Mammary epithelial cell (primary cell): ENCODE measurements at regions of chr19 and their contacts with region 1.

Region 1: GRCh38 chr19:36665832-36666231 is 805 bp downstream of the ZNF461 start:
- DNase-seq: no peak
- H3K4me3 ChIP-seq: peak overlapping the region; percentile 79 to 94 (median 92)
- H3K27ac ChIP-seq: peak overlapping the region; percentile 38
- H3K4me1 ChIP-seq: peaks cover 3% of the 10 kb centered on the region
- H3K27me3 ChIP-seq: no peaks in the 10 kb centered on the region
- CTCF ChIP-seq: no peak

Region 2: DNA sequence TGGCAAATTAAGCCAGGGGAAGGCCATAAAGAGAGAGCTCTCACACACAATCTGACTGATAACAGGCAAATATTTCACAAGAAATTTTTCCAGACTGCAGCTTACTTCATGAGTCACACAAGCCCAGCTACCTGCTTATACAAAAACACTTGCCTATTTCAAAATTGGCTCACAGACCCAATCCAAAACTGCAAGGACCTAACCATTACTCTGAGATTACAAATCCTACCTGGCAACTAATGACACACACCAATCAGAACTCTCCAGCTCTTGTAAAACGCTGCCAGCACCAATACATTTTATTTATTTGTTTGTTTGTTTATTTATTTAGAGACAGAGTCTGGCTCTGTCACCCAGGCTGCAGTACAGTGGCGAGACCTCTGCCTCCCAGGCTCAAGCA is 229.3 kb before region 1 on chr19:
- CTCF ChIA-PET with region 1: no interaction called
- dilution Hi-C with region 1: no loop called
- in situ Hi-C with region 1: no loop called
- intact Hi-C with region 1: no loop called
- DNase-seq: peak; percentile 34
- H3K4me3 ChIP-seq: no peak overlapping the region
- H3K27ac ChIP-seq: no peak overlapping the region
- H3K4me1 ChIP-seq: no peaks in the 10 kb centered on the region
- H3K27me3 ChIP-seq: no peaks in the 10 kb centered on the region
- CTCF ChIP-seq: no peak

Region 3: DNA sequence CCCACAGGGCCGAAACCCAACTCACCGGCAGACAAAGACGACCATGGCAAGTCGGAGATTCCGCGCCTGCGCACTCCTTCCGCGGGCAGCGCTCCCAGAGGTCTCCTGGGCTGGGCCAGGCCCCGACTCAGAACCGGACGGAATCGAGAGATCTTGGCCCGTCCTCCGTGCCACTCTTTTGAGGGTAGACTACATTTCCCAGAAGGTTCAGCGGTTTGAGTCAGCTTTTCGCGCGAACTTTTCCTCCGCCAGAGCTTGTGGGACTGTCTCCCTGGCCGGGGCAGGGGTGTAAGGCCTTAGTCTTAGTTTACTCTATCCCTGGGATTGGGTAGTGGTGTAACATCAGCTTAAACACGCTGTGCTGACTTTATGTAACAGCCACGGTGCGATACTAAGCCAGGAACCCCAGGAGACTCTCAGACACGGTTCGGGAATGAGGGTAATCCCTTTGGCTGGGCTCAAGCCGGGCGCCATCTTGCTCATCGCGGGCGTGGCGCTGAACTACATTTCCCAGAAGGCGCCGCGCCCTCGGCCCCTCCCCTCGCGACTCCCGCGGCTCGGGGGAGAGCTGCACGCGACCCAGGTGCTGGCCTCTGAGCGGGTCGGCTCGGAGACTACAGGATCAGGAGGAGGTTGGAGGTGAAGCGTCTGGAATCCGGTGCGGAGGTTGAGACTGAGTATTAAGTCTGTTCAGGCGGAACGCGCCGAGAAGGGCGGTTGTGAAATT is 137.5 kb before region 1 on chr19 and contains the start of gene ZNF260:
- CTCF ChIA-PET with region 1: no interaction called
- dilution Hi-C with region 1: no loop called
- in situ Hi-C with region 1: no loop called
- intact Hi-C with region 1: loop called (anchors 1 kb)
- DNase-seq: peak; percentile 96
- H3K4me3 ChIP-seq: peak within 1 kb of the TSS; percentile 47 to 99 (median 86)
- H3K27ac ChIP-seq: peak within 1 kb of the TSS; percentile 88
- H3K4me1 ChIP-seq: peaks cover 5% of the 10 kb centered on the region
- H3K27me3 ChIP-seq: no peaks in the 10 kb centered on the region
- CTCF ChIP-seq: peak in 1 of 2 donors; percentile 9
- total RNA-seq, gene ZNF260: 11.8 to 21.0 TPM

Region 4: DNA sequence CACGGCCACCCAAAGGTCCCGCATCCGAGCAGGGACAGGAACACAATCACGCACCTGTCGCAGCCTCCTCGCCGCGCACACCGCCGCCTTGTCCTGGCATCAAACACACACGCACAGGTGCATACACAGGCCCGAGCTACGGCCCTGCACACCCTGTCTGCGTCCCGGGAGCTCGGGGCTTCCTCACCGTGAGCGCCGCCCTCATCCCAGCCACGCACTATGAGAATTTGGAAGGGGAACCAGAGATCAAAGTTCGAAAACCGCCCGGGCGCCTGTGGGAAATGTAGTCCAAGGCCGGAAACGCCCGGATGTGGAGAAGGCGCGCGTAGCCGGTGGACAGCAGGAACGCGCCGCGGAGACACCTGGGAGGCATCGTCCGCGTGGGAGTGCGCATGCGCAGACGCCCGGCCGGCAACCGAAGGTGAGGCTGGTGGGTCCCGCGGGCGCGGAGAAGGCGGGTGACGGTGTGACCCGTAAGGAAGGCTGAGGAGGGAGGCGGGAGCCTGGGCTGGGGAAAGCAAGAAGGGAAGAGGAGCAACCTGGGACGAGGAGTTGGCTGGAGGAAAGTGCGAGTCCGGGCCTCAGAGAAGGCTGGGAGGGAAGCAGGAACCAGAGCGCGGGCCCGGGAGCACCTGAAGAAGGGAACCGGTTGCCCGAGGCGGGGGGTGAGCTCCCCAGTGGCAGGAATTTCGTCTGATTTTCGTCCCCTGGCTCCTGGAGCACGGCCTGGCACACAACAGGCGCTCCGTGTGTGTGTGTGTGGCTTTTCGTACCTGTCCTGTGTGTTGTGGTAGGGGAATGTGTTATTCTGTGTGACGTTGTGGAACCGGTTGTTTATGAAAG is 21.6 kb after region 1 on chr19 and contains the start of gene ZNF567:
- CTCF ChIA-PET with region 1: no interaction called
- dilution Hi-C with region 1: no loop called
- in situ Hi-C with region 1: no loop called
- intact Hi-C with region 1: loop called (anchors 1 kb)
- DNase-seq: peak; percentile 96
- H3K4me3 ChIP-seq: peak within 1 kb of the TSS; percentile 75 to 92 (median 90)
- H3K27ac ChIP-seq: peak within 1 kb of the TSS; percentile 69
- H3K4me1 ChIP-seq: no peaks in the 10 kb centered on the region
- H3K27me3 ChIP-seq: no peaks in the 10 kb centered on the region
- CTCF ChIP-seq: peak in 1 of 2 donors; percentile 11
- total RNA-seq, gene ZNF567: 7.3 to 7.5 TPM